ENCODE measurements at regions of chr22 and their contacts with region 1.

Region 1: DNA sequence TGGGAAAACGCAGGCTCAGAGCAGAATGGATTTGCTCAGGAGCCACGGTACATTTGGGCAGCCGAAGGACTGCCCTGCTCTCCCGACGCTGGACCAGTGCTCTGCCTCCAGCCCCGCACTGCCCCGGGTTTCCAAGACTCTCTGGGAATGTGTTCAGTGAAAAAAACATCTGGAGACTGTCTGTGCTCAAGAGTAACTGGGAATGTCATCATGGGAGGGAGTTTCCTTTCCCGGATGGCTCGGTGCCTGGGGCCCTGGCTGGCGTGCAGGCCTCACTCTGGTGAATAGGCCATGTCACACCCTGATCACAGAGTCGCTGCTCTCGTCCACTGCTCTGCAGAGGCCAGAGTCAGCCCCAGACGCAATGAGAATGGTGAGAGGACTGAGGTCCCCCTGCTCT is 9.8 kb upstream of the APOL6 start:
- DNase-seq: peak; percentile 82 to 90 (median 86)
- H3K4me3 ChIP-seq: no peak overlapping the region
- H3K27ac ChIP-seq: peak overlapping the region; percentile 39 to 79
- H3K4me1 ChIP-seq: peaks cover 30% of the 10 kb centered on the region
- H3K27me3 ChIP-seq: no peaks in the 10 kb centered on the region
- CTCF ChIP-seq: no peak
- EP300 ChIP-seq: peak; percentile 12
- POLR2A ChIP-seq: no peak

Region 2: GRCh38 chr22:35739076-35739930 is 100.9 kb after region 1 on chr22:
- intact Hi-C with region 1: loop called in 2 of 4 experiments (anchors 5 to 10 kb)
- DNase-seq: no peak
- H3K4me3 ChIP-seq: no peak overlapping the region
- H3K27ac ChIP-seq: no peak overlapping the region
- H3K4me1 ChIP-seq: peaks cover 2% of the 10 kb centered on the region
- H3K27me3 ChIP-seq: no peaks in the 10 kb centered on the region
- CTCF ChIP-seq: peak in 1 of 3 donors; percentile 30
- EP300 ChIP-seq: no peak
- POLR2A ChIP-seq: no peak